ENCODE measurements at regions of chr11 and their contacts with region 1.

Region 1: DNA sequence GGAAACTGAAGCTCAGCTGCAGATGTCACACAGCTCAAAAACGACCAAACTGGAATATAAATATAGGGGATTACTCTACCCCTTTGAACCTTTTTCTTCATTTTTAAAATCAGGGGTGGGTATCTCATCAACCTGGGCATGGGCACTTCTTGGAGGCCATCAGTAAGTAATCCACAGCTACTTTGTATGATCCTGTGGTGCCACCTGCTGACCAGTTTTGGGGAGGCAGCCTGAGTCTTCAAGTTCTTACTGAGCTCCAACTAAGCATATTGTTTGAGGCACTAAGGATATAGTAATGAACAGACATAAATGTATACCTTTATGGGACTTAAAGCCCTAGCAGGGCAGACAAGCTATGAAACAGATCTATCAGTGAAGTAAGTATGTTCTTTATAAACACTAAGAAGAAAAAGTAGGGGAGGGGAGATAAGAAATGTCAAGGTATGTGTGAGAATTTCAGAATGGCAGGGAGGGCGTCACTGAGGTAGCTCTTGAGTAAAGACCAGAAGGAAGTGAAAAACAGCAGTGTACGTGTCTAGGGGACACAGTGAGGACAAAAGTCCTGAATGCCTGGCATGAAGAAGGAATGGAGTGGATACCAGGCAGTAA is 18.4 kb downstream of the TUB start:
- DNase-seq: peak; percentile 82
- ATAC-seq: peak; percentile 87
- H3K4me3 ChIP-seq: no peak overlapping the region
- H3K27ac ChIP-seq: no peak overlapping the region
- H3K4me1 ChIP-seq: peaks cover 9% of the 10 kb centered on the region
- H3K27me3 ChIP-seq: no peaks in the 10 kb centered on the region
- CTCF ChIP-seq: peak; percentile 89
- POLR2A ChIP-seq: no peak
- RAD21 ChIP-seq: peak; percentile 91

Region 2: DNA sequence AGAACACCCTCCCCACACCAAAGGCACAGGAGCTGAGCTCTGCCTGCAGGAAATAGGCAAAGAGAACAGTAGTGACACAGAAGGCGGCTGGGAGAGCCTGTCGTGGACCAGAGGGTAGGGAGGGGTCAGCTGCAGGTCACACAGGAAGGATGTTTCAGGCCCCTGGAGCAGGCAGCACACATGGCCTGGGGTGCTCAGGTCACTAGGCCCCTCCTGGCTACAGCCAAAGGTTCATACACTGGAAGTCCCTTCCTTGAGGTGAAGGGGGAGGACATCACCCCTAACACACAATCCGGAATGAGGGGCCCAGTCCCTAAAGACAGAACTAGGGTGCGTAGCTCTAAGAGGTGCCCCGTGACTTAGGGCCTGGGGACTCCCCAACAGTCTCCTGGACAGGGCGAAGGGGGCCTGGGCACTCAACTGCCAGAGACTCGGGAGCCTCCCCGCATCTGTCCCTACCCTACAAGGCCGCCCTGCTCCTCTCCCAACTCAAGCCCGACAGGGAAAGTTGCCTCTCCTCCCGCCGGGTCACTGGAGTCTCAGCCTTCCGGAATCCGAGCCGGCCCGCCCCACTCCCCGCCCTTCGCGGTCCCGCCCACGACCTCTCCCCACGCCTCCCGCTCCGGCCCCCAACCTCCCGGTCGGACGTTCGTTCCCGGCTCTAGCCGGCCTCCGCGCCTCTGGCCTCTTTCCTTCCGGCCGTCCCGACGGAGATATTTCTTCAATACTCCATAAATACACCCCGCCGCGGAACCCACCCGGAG is 426.3 kb before region 1 on chr11 and contains the start of gene CYB5R2:
- CTCF ChIA-PET with region 1: no interaction called
- POLR2A ChIA-PET with region 1: no interaction called
- dilution Hi-C with region 1: no loop called
- in situ Hi-C with region 1: loop called (anchors 25 kb)
- intact Hi-C with region 1: loop called (anchors 10 kb)
- DNase-seq: peak; percentile 5
- ATAC-seq: peak; percentile 85
- H3K4me3 ChIP-seq: peak within 1 kb of the TSS; percentile 35
- H3K27ac ChIP-seq: no peak within 1 kb of the TSS; the same call in 1 of the 2 replicates
- H3K4me1 ChIP-seq: no peaks in the 10 kb centered on the region
- H3K27me3 ChIP-seq: peaks cover 12% of the 10 kb centered on the region
- CTCF ChIP-seq: no peak
- POLR2A ChIP-seq: no peak
- RAD21 ChIP-seq: no peak
- total RNA-seq, gene CYB5R2: 3.9 and 4.7 TPM in 2 replicates

Region 3: DNA sequence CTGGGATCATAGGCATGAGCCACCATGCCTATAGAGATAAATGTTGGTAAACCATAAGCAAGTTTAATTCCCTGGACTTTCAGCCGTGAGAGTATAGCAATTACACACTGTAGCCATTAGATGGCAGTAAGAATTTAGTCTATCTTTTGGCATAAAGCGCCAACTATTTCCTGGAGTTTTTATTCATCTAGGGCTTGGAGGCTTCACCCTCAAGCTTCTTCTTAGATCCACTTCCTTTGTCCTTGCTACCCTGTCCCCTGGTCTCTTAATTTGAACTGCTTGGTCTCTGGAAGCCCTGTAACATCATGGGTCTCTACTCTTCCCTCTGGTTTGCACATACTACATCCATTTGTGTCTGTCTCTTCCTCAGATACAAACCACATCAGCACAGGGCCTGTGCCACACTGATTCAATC is 206.5 kb before region 1 on chr11:
- CTCF ChIA-PET with region 1: no interaction called
- POLR2A ChIA-PET with region 1: no interaction called
- dilution Hi-C with region 1: no loop called
- in situ Hi-C with region 1: loop called (anchors 10 kb)
- intact Hi-C with region 1: loop called (anchors 5 kb)
- DNase-seq: peak; percentile 74
- ATAC-seq: peak; percentile 89
- H3K4me3 ChIP-seq: no peak overlapping the region
- H3K27ac ChIP-seq: peak overlapping the region; percentile 55; the same call in 1 of the 2 replicates
- H3K4me1 ChIP-seq: peaks cover 9% of the 10 kb centered on the region
- H3K27me3 ChIP-seq: no peaks in the 10 kb centered on the region
- CTCF ChIP-seq: peak; percentile 77
- POLR2A ChIP-seq: no peak
- RAD21 ChIP-seq: peak; percentile 73

Region 4: GRCh38 chr11:8006349-8006977 is 92.9 kb before region 1 on chr11:
- CTCF ChIA-PET with region 1: interaction called, 55 read pairs
- POLR2A ChIA-PET with region 1: no interaction called
- dilution Hi-C with region 1: no loop called
- in situ Hi-C with region 1: loop called (anchors 5 kb)
- intact Hi-C with region 1: loop called (anchors 1 kb)
- DNase-seq: peak; percentile 71
- ATAC-seq: peak; percentile 98
- H3K4me3 ChIP-seq: no peak overlapping the region
- H3K27ac ChIP-seq: no peak overlapping the region
- H3K4me1 ChIP-seq: peaks cover under 1% of the 10 kb centered on the region; the same call in 1 of the 2 replicates
- H3K27me3 ChIP-seq: no peaks in the 10 kb centered on the region
- CTCF ChIP-seq: peak; percentile 98
- POLR2A ChIP-seq: peak; percentile 61
- RAD21 ChIP-seq: peak; percentile 100

Region 5: DNA sequence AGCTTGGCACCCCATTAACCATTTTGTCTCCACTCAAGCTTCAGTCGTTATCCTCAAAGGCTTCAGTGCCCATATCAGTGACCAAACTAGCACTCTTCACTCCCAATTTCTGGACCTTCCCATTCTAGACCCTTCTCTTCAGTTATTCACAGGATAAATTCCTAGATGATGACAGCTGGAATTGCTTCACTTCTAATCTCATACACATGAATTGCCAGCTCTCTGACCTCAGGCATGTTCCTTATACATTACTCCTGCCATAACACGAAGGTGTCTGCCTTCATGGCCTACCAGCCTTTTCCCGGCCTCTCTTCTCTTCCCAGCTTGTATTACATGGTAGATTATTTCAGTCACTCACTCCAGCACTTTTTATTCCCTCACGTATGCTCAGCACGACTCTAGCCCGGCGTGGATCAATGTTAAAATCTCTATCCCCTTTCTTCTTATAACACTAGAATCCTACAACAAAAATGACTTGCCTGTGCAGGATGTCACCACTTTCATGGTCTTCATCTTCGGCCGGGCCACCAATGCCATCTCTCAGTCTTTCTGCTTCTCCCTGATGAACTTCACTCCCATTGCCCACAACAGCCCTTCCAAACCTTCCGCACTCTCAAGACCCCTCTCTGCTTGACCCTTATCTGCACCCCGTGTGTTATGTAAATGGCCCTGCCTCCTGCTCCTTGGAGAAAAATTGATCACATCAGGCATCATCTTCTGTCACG is 75.4 kb before region 1 on chr11:
- CTCF ChIA-PET with region 1: interaction called, 10 read pairs
- POLR2A ChIA-PET with region 1: no interaction called
- dilution Hi-C with region 1: no loop called
- in situ Hi-C with region 1: no loop called
- intact Hi-C with region 1: no loop called
- DNase-seq: peak; percentile 54
- ATAC-seq: no peak
- H3K4me3 ChIP-seq: no peak overlapping the region
- H3K27ac ChIP-seq: no peak overlapping the region
- H3K4me1 ChIP-seq: peaks cover 7% of the 10 kb centered on the region
- H3K27me3 ChIP-seq: no peaks in the 10 kb centered on the region
- CTCF ChIP-seq: no peak
- POLR2A ChIP-seq: no peak
- RAD21 ChIP-seq: no peak

Region 6: GRCh38 chr11:8234425-8234821 is 135.0 kb after region 1 on chr11:
- CTCF ChIA-PET with region 1: no interaction called
- POLR2A ChIA-PET with region 1: no interaction called
- dilution Hi-C with region 1: no loop called
- in situ Hi-C with region 1: no loop called
- intact Hi-C with region 1: no loop called
- DNase-seq: no peak
- ATAC-seq: no peak
- H3K4me3 ChIP-seq: no peak overlapping the region
- H3K27ac ChIP-seq: no peak overlapping the region
- H3K4me1 ChIP-seq: no peaks in the 10 kb centered on the region; the same call in 1 of the 2 replicates
- H3K27me3 ChIP-seq: peaks cover 17% of the 10 kb centered on the region
- CTCF ChIP-seq: no peak
- POLR2A ChIP-seq: no peak
- RAD21 ChIP-seq: no peak

Region 7: GRCh38 chr11:8263769-8264410 is 164.5 kb after region 1 on chr11 and contains the start of gene LMO1:
- CTCF ChIA-PET with region 1: interaction called, 3 read pairs
- POLR2A ChIA-PET with region 1: no interaction called
- dilution Hi-C with region 1: no loop called
- in situ Hi-C with region 1: no loop called
- intact Hi-C with region 1: loop called (anchors 5 kb)
- DNase-seq: peak; percentile 62
- ATAC-seq: peak; percentile 81
- H3K4me3 ChIP-seq: peak within 1 kb of the TSS; percentile 27
- H3K27ac ChIP-seq: no peak within 1 kb of the TSS
- H3K4me1 ChIP-seq: no peaks in the 10 kb centered on the region; the same call in 1 of the 2 replicates
- H3K27me3 ChIP-seq: peaks cover 84% of the 10 kb centered on the region
- CTCF ChIP-seq: peak; percentile 77
- POLR2A ChIP-seq: no peak
- RAD21 ChIP-seq: peak; percentile 58
- total RNA-seq, gene LMO1: not detected in 2 replicates